Activated T-helper 2 cell treated with anti-CD3 and anti-CD28 coated beads, Interferon-gamma antibody, Interleukin-2, Interleukin-4, amounts not matched to agents 10 μg/mL and 5 μg/mL and 100 μg/mL, durations not matched to agents 14 hours and 24 hours and 36 hours (primary cell): ENCODE measurements at regions of chr1 and their contacts with region 1.

Region 1: GRCh38 chr1:198187973-198188588 is 31.3 kb downstream of the NEK7 start:
- DNase-seq: no peak
- H3K4me3 Mint-ChIP-seq: peak overlapping the region; percentile 5
- H3K27ac Mint-ChIP-seq: peak overlapping the region; percentile 4
- H3K4me1 Mint-ChIP-seq: peaks cover 66% of the 10 kb centered on the region
- H3K27me3 Mint-ChIP-seq: no peaks in the 10 kb centered on the region

Region 2: GRCh38 chr1:198167436-198167934 is 20.6 kb before region 1 on chr1:
- intact Hi-C with region 1: loop called (anchors 2 kb)
- DNase-seq: no peak
- H3K4me3 Mint-ChIP-seq: peak overlapping the region; percentile 48
- H3K27ac Mint-ChIP-seq: peak overlapping the region; percentile 89
- H3K4me1 Mint-ChIP-seq: peaks cover 70% of the 10 kb centered on the region
- H3K27me3 Mint-ChIP-seq: no peaks in the 10 kb centered on the region

Region 3: GRCh38 chr1:198174297-198174696 is 13.8 kb before region 1 on chr1:
- intact Hi-C with region 1: loop called (anchors 1 kb)
- DNase-seq: no peak
- H3K4me3 Mint-ChIP-seq: peak overlapping the region; percentile 38
- H3K27ac Mint-ChIP-seq: peak overlapping the region; percentile 81
- H3K4me1 Mint-ChIP-seq: peaks cover 79% of the 10 kb centered on the region
- H3K27me3 Mint-ChIP-seq: no peaks in the 10 kb centered on the region

Region 4: GRCh38 chr1:198201956-198202784 is 14.1 kb after region 1 on chr1:
- intact Hi-C with region 1: loop called (anchors 1 kb)
- DNase-seq: no peak
- H3K4me3 Mint-ChIP-seq: peak overlapping the region; percentile 61
- H3K27ac Mint-ChIP-seq: peak overlapping the region; percentile 82
- H3K4me1 Mint-ChIP-seq: peaks cover 71% of the 10 kb centered on the region
- H3K27me3 Mint-ChIP-seq: no peaks in the 10 kb centered on the region